ENCODE measurements at regions of chr7 and their contacts with region 1.

Region 1: DNA sequence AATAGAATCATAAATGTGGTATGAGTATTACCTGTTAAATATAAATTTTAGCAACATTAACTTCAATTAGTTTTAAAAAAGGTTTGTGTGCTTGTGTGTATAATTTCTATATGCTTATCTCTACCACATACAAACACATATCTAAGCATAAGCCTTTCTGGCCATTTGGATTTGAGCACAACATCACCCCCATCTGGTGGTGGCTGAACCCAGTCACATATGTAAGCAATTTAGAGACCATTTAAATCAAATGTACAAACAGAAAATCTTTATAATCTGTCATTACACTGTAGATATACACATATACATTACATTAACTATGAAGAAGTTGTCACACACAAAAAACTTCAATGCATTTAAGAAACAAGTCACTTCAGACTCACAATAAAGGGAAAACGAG is 31.7 kb downstream of the GPR22 start:
- DNase-seq: peak; percentile 52
- H3K4me3 ChIP-seq: no peak overlapping the region
- H3K27ac ChIP-seq: no peak overlapping the region
- H3K4me1 ChIP-seq: no peaks in the 10 kb centered on the region
- H3K27me3 ChIP-seq: no peaks in the 10 kb centered on the region
- CTCF ChIP-seq: peak; percentile 70

Region 2: DNA sequence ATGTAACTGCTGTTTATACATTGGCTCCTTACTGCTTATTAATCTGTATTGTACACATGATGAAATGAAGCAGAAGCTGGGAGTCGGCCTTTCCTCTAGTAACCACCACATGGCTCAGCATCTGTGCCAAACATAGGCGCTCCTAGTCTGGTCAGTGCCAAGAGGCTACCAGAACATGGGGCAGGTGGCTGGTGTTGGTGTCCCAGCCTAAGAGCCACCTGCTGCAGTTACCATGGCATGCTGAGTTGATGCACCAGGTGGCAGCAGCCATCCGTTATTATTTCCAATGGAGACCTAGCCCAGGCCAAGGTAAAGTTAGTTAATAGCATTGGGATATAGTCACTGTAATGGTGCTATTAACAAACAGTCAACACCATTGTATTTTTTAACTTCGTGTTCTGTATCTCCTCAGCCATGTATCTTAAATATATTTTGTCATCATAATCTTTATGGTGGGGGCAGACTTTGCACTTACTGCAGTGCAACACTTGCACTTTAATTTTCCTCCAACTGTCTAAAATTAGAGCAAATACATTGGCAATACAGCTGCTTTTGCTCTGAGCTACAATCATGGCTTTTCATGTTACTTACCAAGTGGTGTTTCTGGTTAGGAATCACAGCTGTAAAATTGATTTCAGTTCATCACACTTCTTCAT is 299.7 kb before region 1 on chr7:
- CTCF ChIA-PET with region 1: no interaction called
- POLR2A ChIA-PET with region 1: no interaction called
- intact Hi-C with region 1: loop called (anchors 5 kb)
- DNase-seq: peak; percentile 38
- H3K4me3 ChIP-seq: no peak overlapping the region
- H3K27ac ChIP-seq: no peak overlapping the region
- H3K4me1 ChIP-seq: no peaks in the 10 kb centered on the region
- H3K27me3 ChIP-seq: no peaks in the 10 kb centered on the region
- CTCF ChIP-seq: peak; percentile 52